GM12878 (cell line): ENCODE measurements at regions of chr22 and their contacts with region 1.

Region 1: DNA sequence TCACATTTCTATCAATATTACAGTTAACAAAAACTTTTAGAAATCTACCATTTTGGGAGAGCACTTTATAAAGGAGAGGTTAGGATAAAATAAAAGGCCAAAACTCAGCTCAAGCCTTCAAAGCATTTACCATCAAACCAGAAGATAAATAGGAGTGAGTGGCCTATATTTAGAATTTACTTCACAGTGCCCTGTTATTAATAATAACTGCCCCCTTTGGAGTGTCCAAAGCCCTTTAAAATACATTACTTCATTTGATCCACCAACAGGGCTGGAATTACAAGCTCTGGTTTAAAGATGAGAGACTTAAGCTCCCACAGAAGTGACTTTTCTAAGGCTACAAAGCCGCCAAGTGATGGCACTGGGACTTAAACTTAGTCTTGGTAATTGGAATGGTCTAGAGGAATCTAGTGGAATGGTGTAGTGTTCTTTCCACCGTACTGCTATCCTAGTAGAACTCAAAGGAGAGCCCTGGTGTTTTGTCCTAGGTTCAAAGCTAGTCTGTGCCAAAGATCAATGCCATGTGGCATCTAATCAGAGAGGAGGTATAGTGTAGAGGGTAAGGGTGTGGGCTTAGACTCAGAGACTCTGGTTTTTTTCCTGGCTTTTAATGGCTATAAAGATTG is 21.2 kb upstream of the MTMR3 start:
- DNase-seq: no peak
- ATAC-seq: no peak
- H3K4me3 ChIP-seq: no peak overlapping the region
- H3K27ac ChIP-seq: no peak overlapping the region
- H3K4me1 ChIP-seq: no peaks in the 10 kb centered on the region
- H3K27me3 ChIP-seq: no peaks in the 10 kb centered on the region
- CTCF ChIP-seq: no peak
- EP300 ChIP-seq: no peak
- POLR2A ChIP-seq: no peak
- RAD21 ChIP-seq: no peak

Region 2: GRCh38 chr22:31790240-31790639 is 1928.5 kb after region 1 on chr22:
- CTCF ChIA-PET with region 1: no interaction called
- POLR2A ChIA-PET with region 1: interaction called, 11 read pairs
- RAD21 ChIA-PET with region 1: no interaction called
- SMC1A ChIA-PET with region 1: no interaction called
- in situ Hi-C with region 1: no loop called
- intact Hi-C with region 1: no loop called
- DNase-seq: no peak
- ATAC-seq: peak; percentile 97
- H3K4me3 ChIP-seq: no peak overlapping the region
- H3K27ac ChIP-seq: peak overlapping the region; percentile 68
- H3K4me1 ChIP-seq: peaks cover 30% of the 10 kb centered on the region
- H3K27me3 ChIP-seq: no peaks in the 10 kb centered on the region
- CTCF ChIP-seq: no peak
- EP300 ChIP-seq: peak in 1 of 2 experiments; percentile 72; a peak in 2 of 4 replicates
- POLR2A ChIP-seq: no peak
- RAD21 ChIP-seq: no peak